ENCODE measurements at regions of chr11 and their contacts with region 1.

Region 1: GRCh38 chr11:119474682-119475596 is 52.0 kb upstream of the THY1 start:
- DNase-seq: peak; percentile 71
- CTCF ChIP-seq: peak; percentile 89

Region 2: DNA sequence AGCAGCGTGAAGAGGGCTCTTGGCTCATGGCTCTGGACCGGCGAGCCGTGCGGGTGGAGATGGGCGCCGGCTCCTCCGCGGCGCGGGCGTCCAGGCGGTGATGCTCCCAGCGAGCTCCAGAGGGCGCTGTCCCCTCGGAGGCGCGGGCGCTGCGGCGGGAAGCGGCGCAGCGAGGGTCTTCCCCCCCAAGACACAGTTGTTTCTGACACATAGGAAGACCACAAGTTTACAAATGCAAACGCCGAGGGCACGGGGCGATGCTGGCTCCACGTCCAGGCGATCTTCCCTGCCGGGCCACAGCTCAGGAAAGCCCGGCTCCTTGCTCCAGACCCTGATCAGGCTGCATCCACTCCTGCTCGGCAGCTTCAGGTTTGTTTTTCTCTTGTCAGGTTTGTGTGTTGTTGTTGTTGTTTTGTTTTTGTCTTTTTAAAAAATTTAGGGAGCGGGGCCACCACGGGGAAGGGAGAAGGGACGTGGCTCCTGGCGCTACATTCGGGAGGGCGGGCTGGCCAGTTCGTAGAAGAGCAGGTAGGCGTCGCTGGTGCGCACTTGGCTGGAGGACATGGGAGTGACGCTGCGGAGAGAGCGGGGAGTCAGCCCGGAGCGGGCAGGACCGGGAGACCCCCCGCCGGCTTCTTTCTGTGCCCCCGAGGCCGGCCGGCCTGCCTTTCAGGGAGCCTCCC is 118.4 kb before region 1 on chr11:
- CTCF ChIA-PET with region 1: interaction called, 102 read pairs
- POLR2A ChIA-PET with region 1: no interaction called
- DNase-seq: peak; percentile 87
- CTCF ChIP-seq: peak; percentile 97

Region 3: DNA sequence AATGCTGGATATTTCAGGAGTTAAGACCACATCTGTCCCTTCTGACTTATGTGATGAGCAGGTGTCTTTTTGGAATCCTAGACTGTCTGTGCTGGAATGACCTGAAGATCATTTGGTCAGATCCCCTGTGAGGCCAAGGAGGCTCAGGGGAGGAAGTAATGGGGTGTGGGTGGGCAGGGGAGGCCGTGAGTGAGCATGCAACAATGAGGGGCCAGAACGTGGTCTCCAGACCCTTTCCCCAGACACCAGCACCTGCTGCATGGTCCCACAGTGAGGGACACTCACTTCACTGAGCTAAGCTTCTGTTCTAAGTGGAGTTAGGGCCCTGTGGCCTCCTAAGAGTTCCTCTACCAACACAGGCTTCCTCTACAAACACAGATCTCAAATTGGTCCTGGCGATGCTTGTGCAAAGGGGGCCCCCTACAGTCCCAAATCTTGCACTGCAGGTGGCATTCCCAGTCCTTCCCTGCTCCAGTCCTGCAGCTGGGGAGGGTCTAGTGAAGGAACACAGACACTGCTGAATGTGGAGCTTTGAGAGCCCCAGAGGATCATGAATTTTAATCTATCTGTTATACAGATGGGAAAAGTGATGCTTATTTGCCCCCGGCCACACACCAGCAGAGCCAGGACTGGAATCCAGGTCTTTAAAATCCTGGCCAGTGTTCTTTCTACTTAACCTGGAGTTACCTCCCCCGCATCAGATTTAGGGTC is 100.9 kb before region 1 on chr11:
- CTCF ChIA-PET with region 1: interaction called, 12 read pairs
- POLR2A ChIA-PET with region 1: no interaction called
- DNase-seq: peak; percentile 63
- CTCF ChIP-seq: peak; percentile 84

Region 4: DNA sequence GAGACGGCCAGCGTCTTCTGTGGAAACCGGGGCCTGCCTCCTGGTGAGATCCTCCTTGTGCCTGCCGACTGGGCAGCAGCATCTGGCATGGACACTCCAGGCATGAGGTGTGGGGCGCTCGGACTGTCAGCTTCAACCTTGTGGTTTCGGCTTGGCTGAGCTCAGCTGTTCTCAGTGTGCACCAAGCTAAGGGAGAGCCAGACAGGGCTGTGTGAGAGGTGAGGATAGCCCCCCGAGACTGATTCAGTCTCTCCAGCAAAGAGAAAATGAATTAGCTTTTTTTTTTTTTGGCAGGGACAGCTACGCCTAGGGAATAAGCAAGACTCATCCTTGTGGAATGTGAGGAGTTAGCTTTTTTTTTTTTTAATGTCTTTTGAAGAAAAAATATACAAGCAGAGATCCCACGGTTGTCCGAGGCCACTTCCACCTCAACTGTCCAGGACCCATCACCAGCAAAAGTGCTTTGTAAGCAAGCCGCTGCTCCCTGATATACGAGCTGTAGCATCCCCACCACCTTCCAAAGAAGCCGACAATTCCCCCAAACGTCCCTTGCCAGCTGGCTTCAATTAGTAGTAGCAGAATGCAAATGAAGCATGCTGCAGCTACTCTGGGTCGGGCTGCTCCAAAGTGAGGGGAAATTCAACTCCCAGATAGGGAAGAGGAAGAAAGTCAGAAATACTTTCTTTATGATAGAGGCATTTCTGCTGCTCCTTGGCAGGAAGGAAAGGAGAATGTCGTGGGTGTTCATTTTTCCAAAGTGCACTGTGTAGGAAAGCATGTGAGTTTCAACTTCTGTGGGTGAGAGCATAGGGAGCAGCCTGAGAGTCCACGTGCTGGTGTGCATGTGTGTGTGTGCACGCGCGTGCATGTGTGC is 42.2 kb before region 1 on chr11:
- CTCF ChIA-PET with region 1: interaction called, 10 read pairs
- POLR2A ChIA-PET with region 1: no interaction called
- DNase-seq: no peak
- CTCF ChIP-seq: no peak

Region 5: DNA sequence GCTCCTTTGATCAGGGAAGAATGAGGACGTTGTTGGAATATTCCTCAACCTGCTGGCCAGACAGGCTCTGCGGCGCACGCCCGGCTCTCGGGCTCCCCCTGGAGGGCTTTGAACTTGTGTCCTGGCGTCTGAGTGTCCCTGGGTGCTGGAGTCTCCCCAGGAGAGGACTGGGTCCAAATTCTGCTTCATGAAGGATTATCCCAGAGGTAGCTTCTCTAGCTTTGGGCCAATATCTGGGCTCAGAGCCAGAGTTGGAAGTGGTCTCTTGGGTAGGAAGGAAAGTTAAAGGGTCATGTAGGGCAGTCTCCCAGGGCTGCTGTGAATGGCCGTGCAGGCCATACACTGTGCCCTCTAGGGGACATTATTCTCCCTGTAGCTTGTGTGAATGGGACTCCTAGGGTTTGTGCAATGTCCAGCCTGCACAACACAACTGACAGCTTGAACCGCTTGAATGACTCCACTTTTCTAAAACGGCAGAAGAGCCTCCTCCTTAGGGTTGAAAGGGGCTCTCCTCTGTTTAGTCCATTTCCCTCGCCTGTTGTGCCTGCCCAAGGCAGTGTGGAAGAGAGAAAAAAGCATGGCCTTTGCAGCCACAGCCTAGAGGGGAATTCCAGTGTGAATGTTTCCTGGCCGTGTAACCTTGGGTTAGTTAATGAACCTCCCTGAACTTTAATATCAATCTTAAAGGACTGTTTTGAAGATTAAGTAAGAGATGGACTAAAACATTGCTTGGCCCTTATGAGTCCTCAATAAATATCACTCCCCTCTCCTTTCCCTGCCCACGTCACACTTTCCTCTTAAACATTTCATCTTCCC is 59.2 kb after region 1 on chr11:
- CTCF ChIA-PET with region 1: interaction called, 12 read pairs
- POLR2A ChIA-PET with region 1: no interaction called
- DNase-seq: peak; percentile 78
- CTCF ChIP-seq: peak; percentile 78

Region 6: GRCh38 chr11:119741369-119742262 is 266.7 kb after region 1 on chr11:
- CTCF ChIA-PET with region 1: no interaction called
- POLR2A ChIA-PET with region 1: no interaction called
- DNase-seq: peak; percentile 87
- CTCF ChIP-seq: peak; percentile 92

Region 7: GRCh38 chr11:119919656-119920055 is 444.7 kb after region 1 on chr11:
- CTCF ChIA-PET with region 1: no interaction called
- POLR2A ChIA-PET with region 1: no interaction called
- DNase-seq: no peak
- CTCF ChIP-seq: no peak